PC-9 (cell line): ENCODE measurements at regions of chr7 and their contacts with region 1.

Region 1: GRCh38 chr7:55432939-55433784 is 68.0 kb downstream of the LANCL2 start:
- DNase-seq: peak; percentile 47 to 79
- H3K4me3 ChIP-seq: no peak overlapping the region
- H3K27ac ChIP-seq: no peak overlapping the region
- H3K4me1 ChIP-seq: no peaks in the 10 kb centered on the region
- H3K27me3 ChIP-seq: no peaks in the 10 kb centered on the region
- CTCF ChIP-seq: peak; percentile 93

Region 2: DNA sequence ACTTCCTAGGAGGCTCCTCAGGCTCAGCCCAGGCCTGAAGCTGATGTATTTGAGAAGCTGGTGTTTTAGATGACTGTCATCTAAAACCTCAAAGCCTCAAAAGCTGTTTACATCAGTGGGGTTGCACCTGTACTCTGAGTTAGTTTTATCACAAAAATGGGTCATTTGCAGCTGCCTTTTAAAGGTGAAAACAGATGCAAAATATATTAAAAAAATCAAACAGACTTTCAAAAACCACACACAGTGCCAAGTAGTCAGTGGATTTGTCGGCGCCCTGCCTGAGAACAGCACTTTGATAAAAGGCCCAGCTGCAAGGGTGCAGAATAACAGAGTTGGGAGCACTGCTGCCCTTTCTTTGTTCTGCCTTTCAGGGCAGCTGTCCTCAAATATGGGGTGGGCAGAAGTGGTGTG is 36.1 kb after region 1 on chr7:
- CTCF ChIA-PET with region 1: no interaction called
- POLR2A ChIA-PET with region 1: no interaction called
- intact Hi-C with region 1: no loop called
- DNase-seq: no peak
- H3K4me3 ChIP-seq: no peak overlapping the region
- H3K27ac ChIP-seq: no peak overlapping the region
- H3K4me1 ChIP-seq: no peaks in the 10 kb centered on the region
- H3K27me3 ChIP-seq: no peaks in the 10 kb centered on the region
- CTCF ChIP-seq: no peak

Region 3: DNA sequence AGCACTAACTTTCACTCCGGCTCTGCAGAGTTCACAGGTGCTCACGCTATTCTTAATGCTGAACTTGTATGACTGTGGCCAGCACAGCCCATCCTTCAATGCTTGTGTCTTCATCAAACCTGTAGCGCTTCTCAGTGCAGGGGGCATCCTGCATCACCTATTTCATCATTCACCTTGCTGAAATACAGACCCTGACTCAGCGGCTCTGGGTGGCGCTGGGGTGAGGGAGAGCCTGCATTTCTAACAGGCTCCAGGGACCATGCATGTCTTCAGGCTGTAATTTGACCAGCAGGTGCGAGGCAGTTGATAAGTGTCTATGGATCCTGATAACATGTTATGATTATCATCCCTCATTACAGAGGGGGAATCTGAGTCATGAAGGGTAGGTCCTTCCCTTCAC is 49.9 kb after region 1 on chr7:
- CTCF ChIA-PET with region 1: no interaction called
- POLR2A ChIA-PET with region 1: no interaction called
- intact Hi-C with region 1: no loop called
- DNase-seq: no peak
- H3K4me3 ChIP-seq: no peak overlapping the region
- H3K27ac ChIP-seq: no peak overlapping the region
- H3K4me1 ChIP-seq: no peaks in the 10 kb centered on the region
- H3K27me3 ChIP-seq: no peaks in the 10 kb centered on the region
- CTCF ChIP-seq: no peak

Region 4: DNA sequence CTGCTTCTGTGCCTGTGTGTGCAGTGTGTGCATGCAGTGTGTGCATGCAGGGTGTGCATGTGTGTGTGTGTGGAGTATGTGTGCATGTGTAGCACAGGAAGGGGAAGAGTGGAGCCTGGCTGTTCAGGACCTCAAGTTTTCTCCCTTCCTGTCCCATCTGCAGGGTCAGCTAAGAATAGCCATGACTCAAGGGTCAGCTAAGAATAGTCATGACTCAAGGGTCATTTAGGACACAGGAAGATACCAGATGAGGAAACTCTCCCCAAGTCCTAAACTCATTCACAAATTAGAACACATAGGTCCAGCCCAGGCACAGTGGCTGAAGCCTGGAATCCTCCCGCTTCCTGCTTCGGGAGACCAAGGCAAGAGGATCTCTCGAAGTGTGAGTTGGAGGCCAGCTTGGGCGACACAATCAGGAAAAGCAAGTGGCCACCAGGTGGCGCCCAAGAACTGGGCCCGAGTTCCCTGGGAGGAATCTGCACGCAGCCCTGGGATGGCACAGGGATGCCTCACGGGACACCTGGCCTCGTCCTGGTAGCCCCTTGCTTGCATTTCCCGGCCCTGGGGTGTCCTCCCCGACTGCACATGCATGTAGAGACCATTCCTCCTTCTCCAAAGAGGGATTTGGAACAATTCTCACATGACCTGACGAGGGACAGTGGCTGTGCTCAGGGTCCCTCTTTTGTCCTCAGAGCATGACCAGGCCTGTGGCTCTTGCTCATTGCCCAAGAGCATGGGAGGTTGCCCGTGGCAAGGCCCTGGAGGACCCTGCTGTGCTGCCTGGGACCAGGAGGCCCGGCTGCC is 160.6 kb after region 1 on chr7:
- CTCF ChIA-PET with region 1: no interaction called
- POLR2A ChIA-PET with region 1: no interaction called
- intact Hi-C with region 1: loop called (anchors 1 kb)
- DNase-seq: peak; percentile 77 to 82
- H3K4me3 ChIP-seq: no peak overlapping the region
- H3K27ac ChIP-seq: no peak overlapping the region
- H3K4me1 ChIP-seq: peaks cover 4% of the 10 kb centered on the region
- H3K27me3 ChIP-seq: no peaks in the 10 kb centered on the region
- CTCF ChIP-seq: peak; percentile 100

Region 5: DNA sequence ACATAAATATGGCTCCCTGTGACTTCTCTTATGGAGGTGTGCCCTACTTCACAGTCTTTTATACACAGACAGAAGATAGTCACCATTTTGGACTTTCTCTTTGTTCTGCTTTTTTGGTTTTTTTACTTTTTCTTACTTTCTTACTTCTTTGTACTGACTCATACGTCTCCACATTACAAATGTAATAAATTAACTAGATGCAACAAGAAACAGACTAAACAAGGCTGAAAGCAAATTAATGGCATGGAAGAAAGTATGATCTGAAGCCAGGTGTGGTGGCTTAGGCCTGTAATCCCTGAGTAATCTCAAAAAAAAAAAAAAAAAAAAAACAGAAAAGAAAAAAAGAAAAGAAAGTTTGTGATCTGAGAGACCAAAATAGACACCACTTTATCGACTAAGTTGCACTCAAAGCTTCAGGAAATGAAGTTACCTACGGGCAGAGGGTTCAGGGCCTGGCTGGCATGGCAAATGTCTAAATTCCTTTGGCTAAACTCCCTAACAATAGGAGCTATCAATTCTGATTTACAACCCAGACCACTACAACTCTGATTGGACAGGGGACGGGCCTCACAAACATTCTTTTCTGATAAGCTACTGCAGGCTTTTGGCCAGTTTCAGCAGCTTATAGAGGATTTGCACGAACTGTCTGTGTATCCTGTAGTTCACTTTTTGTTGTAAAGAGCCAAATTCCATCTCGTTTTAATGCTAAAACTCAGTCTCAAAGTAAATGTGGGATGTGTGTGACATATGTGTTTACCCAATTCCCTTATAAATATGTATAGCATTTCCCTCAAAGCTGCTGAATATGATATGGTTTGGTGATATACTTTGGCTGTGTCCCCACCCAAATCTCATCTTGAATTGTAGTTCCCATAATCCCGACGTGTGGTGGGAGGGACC is 300.3 kb after region 1 on chr7:
- CTCF ChIA-PET with region 1: interaction called, 10 read pairs
- POLR2A ChIA-PET with region 1: no interaction called
- intact Hi-C with region 1: loop called (anchors 10 kb)
- DNase-seq: peak in 1 of 2 experiments; percentile 28
- H3K4me3 ChIP-seq: no peak overlapping the region
- H3K27ac ChIP-seq: no peak overlapping the region
- H3K4me1 ChIP-seq: no peaks in the 10 kb centered on the region
- H3K27me3 ChIP-seq: no peaks in the 10 kb centered on the region
- CTCF ChIP-seq: no peak

Region 6: GRCh38 chr7:56009695-56010094 is 576.5 kb after region 1 on chr7:
- CTCF ChIA-PET with region 1: no interaction called
- POLR2A ChIA-PET with region 1: no interaction called
- intact Hi-C with region 1: loop called (anchors 10 kb)
- DNase-seq: no peak
- H3K4me3 ChIP-seq: no peak overlapping the region
- H3K27ac ChIP-seq: no peak overlapping the region
- H3K4me1 ChIP-seq: no peaks in the 10 kb centered on the region
- H3K27me3 ChIP-seq: no peaks in the 10 kb centered on the region
- CTCF ChIP-seq: no peak